ENCODE measurements at regions of chr12 and their contacts with region 1.

Region 1: DNA sequence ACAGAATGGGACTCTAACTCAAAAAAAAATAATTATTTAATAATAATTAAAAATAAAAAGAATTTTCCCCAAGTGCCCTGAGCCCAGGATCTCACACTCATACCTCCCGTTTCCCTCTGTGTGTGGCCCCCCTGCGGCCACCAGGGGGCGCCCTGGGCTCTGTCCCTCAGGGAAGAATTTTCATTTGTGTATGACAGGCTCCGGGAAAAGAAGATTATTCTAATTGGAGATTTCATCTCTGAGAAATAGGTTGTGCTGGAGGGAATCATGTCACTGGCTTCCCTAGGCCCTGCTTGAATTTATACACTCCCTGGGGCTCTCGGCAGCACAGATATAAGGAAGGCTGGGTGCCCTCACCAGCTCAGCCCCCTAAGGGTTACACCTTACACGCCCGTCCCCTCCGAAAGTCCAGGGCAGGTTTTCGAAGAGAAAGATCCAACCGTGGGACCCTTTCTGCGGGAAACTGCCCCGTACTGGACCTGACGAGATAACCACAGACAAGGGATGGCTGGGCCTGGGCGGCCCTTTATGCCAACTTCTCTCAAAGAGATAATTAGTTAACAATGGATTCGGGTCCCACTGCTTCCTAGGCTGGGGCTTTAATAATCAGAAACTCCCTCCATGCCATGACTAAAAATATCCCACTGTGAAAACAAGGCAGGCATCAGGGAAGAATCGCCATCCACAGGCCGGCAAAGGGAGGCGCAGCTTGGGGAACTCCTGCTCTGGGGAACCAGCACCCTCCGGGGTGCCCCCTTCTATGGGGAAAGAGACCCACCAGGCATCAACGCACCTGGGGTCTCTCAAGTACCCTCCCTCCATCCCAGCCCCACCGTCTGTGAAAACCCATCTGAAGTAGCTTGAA is 80.7 kb downstream of the KDM2B start:
- DNase-seq: peak; percentile 71 to 80 (median 80)
- ATAC-seq: peak; percentile 86 to 95 (median 88)
- H3K4me3 ChIP-seq: peak overlapping the region in 1 of 3 donors; percentile 18
- H3K27ac ChIP-seq: peak overlapping the region in 2 of 3 donors; percentile 17 to 24
- H3K4me1 ChIP-seq: peaks cover 0 to 18% (median 2%) of the 10 kb centered on the region in 4 donors
- H3K27me3 ChIP-seq: no peaks in the 10 kb centered on the region
- CTCF ChIP-seq: peak; percentile 79 to 100 (median 99)
- POLR2A ChIP-seq: no peak

Region 2: GRCh38 chr12:121296618-121297434 is 203.3 kb before region 1 on chr12 and contains the start of gene CAMKK2:
- intact Hi-C with region 1: no loop called
- DNase-seq: peak; percentile 87 to 88 (median 88)
- ATAC-seq: peak; percentile 86 to 93 (median 90)
- H3K4me3 ChIP-seq: peak within 1 kb of the TSS; percentile 93 to 98 (median 98)
- H3K27ac ChIP-seq: peak within 1 kb of the TSS; percentile 84 to 97 (median 92)
- H3K4me1 ChIP-seq: peaks cover 0 to 20% (median 6%) of the 10 kb centered on the region in 4 donors
- H3K27me3 ChIP-seq: no peaks in the 10 kb centered on the region
- CTCF ChIP-seq: peak in 3 of 4 donors; percentile 13 to 30 (median 28)
- POLR2A ChIP-seq: peak; percentile 47
- total RNA-seq, gene CAMKK2: 20.6 to 31.8 (median 24.1) TPM

Region 3: GRCh38 chr12:121550974-121551634 is 50.9 kb after region 1 on chr12:
- intact Hi-C with region 1: loop called in 1 of 2 experiments (anchors 10 kb)
- DNase-seq: peak in 1 of 3 donors; percentile 71
- ATAC-seq: peak; percentile 82 to 91 (median 85)
- H3K4me3 ChIP-seq: no peak overlapping the region
- H3K27ac ChIP-seq: peak overlapping the region in 2 of 3 donors; percentile 64 to 69
- H3K4me1 ChIP-seq: peaks cover 0 to 20% (median 8%) of the 10 kb centered on the region in 4 donors
- H3K27me3 ChIP-seq: no peaks in the 10 kb centered on the region
- CTCF ChIP-seq: no peak
- POLR2A ChIP-seq: no peak

Region 4: GRCh38 chr12:121610239-121611149 is 110.3 kb after region 1 on chr12:
- intact Hi-C with region 1: loop called in 1 of 2 experiments (anchors 10 kb)
- DNase-seq: no peak
- ATAC-seq: peak in 1 of 4 donors; percentile 43
- H3K4me3 ChIP-seq: no peak overlapping the region
- H3K27ac ChIP-seq: no peak overlapping the region
- H3K4me1 ChIP-seq: no peaks in the 10 kb centered on the region
- H3K27me3 ChIP-seq: no peaks in the 10 kb centered on the region
- CTCF ChIP-seq: no peak
- POLR2A ChIP-seq: no peak

Region 5: DNA sequence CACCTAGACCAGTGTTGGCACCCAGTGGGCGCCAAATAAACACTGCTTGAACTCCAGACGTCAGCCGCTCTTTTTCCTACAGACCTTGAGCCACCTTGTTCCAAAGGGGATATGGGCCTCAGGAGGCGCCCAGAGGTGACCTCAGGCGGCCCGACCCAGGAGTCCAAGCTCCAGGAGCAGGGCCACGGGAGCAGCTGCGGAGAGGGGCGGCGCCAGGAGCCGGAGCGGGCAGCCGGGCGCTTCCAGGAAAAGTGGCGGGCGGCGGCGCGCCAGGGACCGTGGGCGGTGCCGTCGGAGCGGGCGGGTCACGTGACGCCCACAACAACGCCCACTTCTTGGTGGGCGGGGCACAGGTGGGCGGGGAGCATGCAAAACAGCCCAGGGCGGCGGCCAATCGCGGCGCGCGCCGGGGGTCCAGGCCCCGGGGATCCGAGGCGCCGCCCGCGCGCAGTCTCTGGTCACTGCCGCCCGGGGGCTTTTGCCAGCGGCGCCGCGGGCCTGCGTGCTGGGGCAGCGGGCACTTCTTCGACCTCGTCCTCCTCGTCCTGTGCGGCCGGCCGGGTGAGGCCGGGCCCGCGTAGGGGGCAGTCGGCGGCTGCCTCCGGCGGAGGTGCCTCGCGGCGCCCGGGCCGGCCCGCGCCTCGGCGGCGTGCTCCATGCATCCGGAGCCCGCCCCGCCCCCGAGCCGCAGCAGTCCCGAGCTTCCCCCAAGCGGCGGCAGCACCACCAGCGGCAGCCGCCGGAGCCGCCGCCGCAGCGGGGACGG is 126.1 kb after region 1 on chr12 and contains the start of gene ORAI1:
- intact Hi-C with region 1: loop called in 1 of 2 experiments (anchors 10 kb)
- DNase-seq: peak; percentile 98 to 99 (median 99)
- ATAC-seq: peak; percentile 80 to 94 (median 88)
- H3K4me3 ChIP-seq: peak within 1 kb of the TSS; percentile 75 to 82 (median 81)
- H3K27ac ChIP-seq: peak within 1 kb of the TSS; percentile 85 to 95 (median 94)
- H3K4me1 ChIP-seq: peaks cover 0 to 19% (median 9%) of the 10 kb centered on the region in 4 donors
- H3K27me3 ChIP-seq: no peaks in the 10 kb centered on the region
- CTCF ChIP-seq: peak in 2 of 4 donors; percentile 25 to 33
- POLR2A ChIP-seq: peak; percentile 94
- total RNA-seq, gene ORAI1: 6.9 to 14.4 (median 9.0) TPM